ENCODE measurements at regions of chr21 and their contacts with region 1.

Region 1: DNA sequence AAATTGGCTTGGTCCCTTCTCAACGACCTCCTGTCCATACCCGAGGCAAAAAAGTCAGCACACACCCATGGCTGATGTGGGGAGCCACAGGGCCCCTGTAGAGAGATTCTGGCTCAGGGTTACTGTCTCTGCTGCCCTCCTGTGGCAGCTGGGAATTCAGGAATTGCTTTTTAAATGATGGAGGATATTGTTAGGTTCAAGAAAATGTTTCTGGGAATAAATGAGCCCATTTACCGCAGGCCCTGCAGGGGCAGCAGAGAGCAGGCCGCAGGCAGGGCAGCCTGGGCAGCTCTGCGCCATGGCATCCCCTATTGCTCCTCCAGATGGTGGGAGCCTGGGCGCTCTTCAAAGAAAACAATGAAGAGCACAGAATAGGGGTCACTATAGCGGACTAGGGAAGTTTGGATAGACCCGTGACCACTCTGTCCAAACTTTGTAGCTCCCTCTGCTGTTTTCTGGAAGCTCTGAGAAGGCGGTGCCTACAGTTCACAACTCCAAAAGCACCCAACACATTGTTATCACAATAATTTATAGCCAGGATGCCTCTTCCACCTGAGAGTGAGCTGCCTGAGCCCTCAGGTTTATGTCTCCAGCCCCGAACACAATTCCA is 201.1 kb downstream of the BACH1 start:
- DNase-seq: no peak
- H3K4me3 ChIP-seq: no peak overlapping the region
- CTCF ChIP-seq: peak; percentile 20

Region 2: GRCh38 chr21:29487154-29487553 is 12.7 kb before region 1 on chr21:
- CTCF ChIA-PET with region 1: interaction called, 16 read pairs
- POLR2A ChIA-PET with region 1: interaction called, 3 read pairs
- DNase-seq: no peak
- H3K4me3 ChIP-seq: no peak overlapping the region
- CTCF ChIP-seq: no peak

Region 3: GRCh38 chr21:29691616-29692491 is 192.0 kb after region 1 on chr21:
- CTCF ChIA-PET with region 1: no interaction called
- POLR2A ChIA-PET with region 1: no interaction called
- DNase-seq: no peak
- H3K4me3 ChIP-seq: no peak overlapping the region
- CTCF ChIP-seq: no peak

Region 4: DNA sequence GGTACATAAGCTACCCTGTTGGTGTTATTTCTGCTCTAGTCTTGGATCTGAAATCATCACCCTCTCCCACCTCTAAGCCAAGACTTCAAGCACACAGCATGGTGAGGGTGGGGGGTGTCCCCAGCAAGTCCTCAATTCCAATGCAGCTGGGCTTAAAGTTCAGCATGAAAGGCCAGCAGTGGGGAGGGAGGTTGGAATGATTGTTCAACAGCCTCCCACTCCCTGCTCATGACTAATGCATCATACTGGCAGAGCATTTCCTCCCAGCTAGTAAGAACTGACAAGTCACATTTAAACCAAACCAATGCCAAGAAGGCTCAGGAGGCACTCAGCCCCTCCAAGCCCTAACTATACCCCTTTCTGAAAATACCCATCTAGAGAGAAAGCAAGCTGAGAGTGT is 1794.1 kb after region 1 on chr21:
- CTCF ChIA-PET with region 1: no interaction called
- POLR2A ChIA-PET with region 1: no interaction called
- DNase-seq: peak; percentile 88
- H3K4me3 ChIP-seq: no peak overlapping the region
- CTCF ChIP-seq: no peak

Measured in AG04449 (cell line).